ENCODE measurements at regions of chr12 and their contacts with region 1.

Region 1: DNA sequence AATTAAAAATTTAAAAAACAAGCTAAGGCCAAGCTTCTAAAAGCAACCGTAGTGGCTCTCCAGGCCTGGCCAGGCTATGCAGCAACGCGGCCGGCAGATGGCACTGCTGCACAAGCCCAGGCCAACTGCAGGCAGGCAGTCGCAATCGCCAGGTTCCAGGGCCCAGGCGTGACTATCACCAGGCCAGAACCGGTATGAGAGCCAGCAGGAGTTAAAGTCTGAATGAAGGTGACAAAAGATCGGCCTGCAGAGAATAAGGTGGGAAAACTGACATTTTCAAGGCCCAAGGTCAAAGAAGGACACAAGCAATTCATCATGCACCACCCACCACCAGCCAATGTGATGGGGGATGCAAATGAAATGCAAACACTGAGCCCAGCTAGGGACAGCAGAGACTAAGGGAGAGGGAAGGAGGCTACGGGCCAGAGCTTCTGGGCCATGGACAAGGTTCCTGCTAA is 43.6 kb upstream of the ANO2 start:
- DNase-seq: peak; percentile 66
- H3K4me3 Mint-ChIP-seq: no peak overlapping the region
- H3K27ac Mint-ChIP-seq: no peak overlapping the region
- H3K4me1 Mint-ChIP-seq: no peaks in the 10 kb centered on the region
- H3K27me3 Mint-ChIP-seq: no peaks in the 10 kb centered on the region
- CTCF ChIP-seq: peak; percentile 97

Region 2: DNA sequence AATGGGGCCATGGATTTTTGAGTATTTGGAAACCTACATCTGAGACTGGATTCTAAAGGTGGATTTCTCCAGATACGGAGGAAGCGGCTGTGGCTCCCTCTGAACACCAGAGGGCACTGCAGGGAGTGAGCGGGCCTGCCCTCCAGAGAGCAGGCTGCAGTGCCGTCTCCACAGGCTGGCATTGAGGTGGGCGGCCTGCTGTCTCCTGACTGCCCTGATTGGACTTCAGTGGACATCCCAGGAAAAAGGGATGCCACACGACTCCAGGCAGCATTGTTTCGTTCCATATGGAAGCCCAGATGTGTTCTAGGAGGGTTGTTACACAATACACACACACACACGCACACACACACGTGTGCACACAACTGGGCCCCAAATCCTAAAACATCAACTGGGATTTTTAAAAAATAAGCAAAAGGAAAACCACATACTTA is 22.7 kb before region 1 on chr12:
- CTCF ChIA-PET with region 1: interaction called, 37 read pairs
- POLR2A ChIA-PET with region 1: no interaction called
- intact Hi-C with region 1: no loop called
- DNase-seq: peak; percentile 61
- H3K4me3 Mint-ChIP-seq: no peak overlapping the region
- H3K27ac Mint-ChIP-seq: no peak overlapping the region
- H3K4me1 Mint-ChIP-seq: no peaks in the 10 kb centered on the region
- H3K27me3 Mint-ChIP-seq: peaks cover 50% of the 10 kb centered on the region
- CTCF ChIP-seq: peak; percentile 69

Region 3: GRCh38 chr12:6026998-6027397 is 38.3 kb after region 1 on chr12:
- CTCF ChIA-PET with region 1: interaction called, 12 read pairs
- POLR2A ChIA-PET with region 1: no interaction called
- intact Hi-C with region 1: no loop called
- DNase-seq: no peak
- H3K4me3 Mint-ChIP-seq: no peak overlapping the region
- H3K27ac Mint-ChIP-seq: no peak overlapping the region
- H3K4me1 Mint-ChIP-seq: no peaks in the 10 kb centered on the region
- H3K27me3 Mint-ChIP-seq: peaks cover 43% of the 10 kb centered on the region
- CTCF ChIP-seq: no peak

Region 4: GRCh38 chr12:6039894-6040568 is 51.3 kb after region 1 on chr12:
- CTCF ChIA-PET with region 1: interaction called, 262 read pairs
- POLR2A ChIA-PET with region 1: interaction called, 4 read pairs
- intact Hi-C with region 1: loop called (anchors 1 kb)
- DNase-seq: peak; percentile 74
- H3K4me3 Mint-ChIP-seq: no peak overlapping the region
- H3K27ac Mint-ChIP-seq: no peak overlapping the region
- H3K4me1 Mint-ChIP-seq: peaks cover 10% of the 10 kb centered on the region
- H3K27me3 Mint-ChIP-seq: no peaks in the 10 kb centered on the region
- CTCF ChIP-seq: peak; percentile 89

Region 5: DNA sequence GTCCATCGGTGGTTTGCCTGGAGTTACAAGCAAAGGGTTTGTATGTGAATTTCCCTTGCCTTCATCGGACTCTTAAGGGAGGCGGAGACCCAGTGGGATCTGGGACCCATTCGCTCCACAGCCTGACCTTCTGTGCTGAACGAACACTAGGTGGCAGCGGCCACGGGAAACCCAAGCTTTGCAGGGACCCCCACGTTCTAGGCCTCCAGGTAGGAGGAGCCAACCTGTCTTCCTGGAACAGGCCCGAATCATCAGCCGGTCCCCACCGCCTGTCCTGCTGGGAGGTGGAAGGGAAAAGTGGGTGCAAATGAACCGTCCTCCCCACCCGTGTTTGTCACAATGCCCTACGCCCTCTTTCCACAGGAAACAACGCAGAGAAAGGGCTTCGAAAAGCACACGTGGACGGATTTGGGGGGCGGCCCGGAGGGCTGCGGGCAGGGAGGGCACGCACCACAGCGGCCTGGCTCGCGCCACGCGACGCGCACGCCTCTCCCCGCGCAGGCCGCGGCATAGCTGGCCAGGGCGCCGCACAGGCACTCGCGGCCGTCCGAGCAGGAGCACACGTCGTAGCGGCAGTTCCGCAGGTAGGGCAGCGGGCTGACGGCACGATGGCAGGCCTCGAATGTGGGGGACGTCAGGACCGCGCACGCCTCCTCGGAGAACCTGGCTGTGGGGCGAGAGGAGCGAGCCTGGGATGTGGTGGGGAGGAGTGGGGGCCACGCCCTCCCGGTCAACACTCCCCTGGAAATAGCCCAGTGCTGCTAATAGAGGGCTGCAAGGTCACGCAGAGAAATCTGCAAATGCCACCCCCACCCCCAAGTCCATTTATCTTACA is 67.9 kb after region 1 on chr12:
- CTCF ChIA-PET with region 1: interaction called, 10 read pairs
- POLR2A ChIA-PET with region 1: no interaction called
- intact Hi-C with region 1: no loop called
- DNase-seq: no peak
- H3K4me3 Mint-ChIP-seq: no peak overlapping the region
- H3K27ac Mint-ChIP-seq: no peak overlapping the region
- H3K4me1 Mint-ChIP-seq: no peaks in the 10 kb centered on the region
- H3K27me3 Mint-ChIP-seq: no peaks in the 10 kb centered on the region
- CTCF ChIP-seq: no peak